Activated T-helper 1 cell treated with anti-CD3 and anti-CD28 coated beads, Interleukin-12 subunit alpha, Interleukin-12 subunit beta, Interleukin-2, Interleukin-4 antibody, amounts not matched to agents 30 ng/mL and 10 ng/mL and 1 ng/mL, durations not matched to agents 14 hours and 24 hours and 36 hours (primary cell): ENCODE measurements at regions of chr10 and their contacts with region 1.

Region 1: GRCh38 chr10:7410862-7411670 is at the start of gene SFMBT2:
- DNase-seq: peak; percentile 64
- H3K4me3 Mint-ChIP-seq: peak within 1 kb of the TSS; percentile 96
- H3K27ac Mint-ChIP-seq: peak within 1 kb of the TSS; percentile 96
- H3K4me1 Mint-ChIP-seq: peaks cover 38% of the 10 kb centered on the region
- H3K27me3 Mint-ChIP-seq: peaks cover 35% of the 10 kb centered on the region
- total RNA-seq, gene SFMBT2: 38.3 and 39.1 TPM in 2 replicates

Region 2: GRCh38 chr10:6920072-6921019 is 490.7 kb before region 1 on chr10:
- intact Hi-C with region 1: loop called (anchors 2 kb)
- DNase-seq: peak; percentile 71
- H3K4me3 Mint-ChIP-seq: no peak overlapping the region
- H3K27ac Mint-ChIP-seq: peak overlapping the region; percentile 26
- H3K4me1 Mint-ChIP-seq: peaks cover 35% of the 10 kb centered on the region
- H3K27me3 Mint-ChIP-seq: no peaks in the 10 kb centered on the region

Region 3: DNA sequence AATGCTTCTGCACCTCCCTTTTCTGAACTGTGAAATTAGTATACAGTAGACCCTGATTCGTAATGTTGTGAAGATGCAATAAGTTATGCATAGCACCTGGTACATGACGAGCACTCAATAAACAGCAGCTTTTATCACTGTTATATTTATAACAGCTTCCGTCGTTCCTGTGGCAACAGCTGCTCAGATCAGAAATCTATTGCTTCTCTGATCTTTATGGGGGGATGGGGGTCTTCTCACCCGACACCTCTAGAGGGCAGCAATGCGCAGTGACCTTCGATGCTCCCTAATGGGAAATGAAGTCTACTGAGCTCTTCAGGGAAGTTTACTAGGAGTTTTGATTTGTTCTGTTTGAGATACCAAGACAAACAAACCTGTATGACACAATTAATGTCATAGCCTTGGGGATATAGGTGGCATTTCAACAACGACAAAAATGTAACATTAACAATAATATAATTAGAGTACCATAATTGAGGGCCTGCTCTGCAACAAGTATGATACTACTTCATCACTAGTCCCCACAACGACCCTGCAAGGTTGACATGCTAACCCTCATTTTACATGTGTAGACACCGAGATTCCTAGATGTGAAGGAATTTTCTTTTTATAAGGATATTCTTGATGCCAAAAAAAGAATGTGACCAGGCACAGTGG is 289.8 kb before region 1 on chr10:
- intact Hi-C with region 1: loop called (anchors 1 kb)
- DNase-seq: peak; percentile 37
- H3K4me3 Mint-ChIP-seq: no peak overlapping the region
- H3K27ac Mint-ChIP-seq: peak overlapping the region; percentile 38
- H3K4me1 Mint-ChIP-seq: peaks cover 6% of the 10 kb centered on the region
- H3K27me3 Mint-ChIP-seq: peaks cover 36% of the 10 kb centered on the region

Region 4: DNA sequence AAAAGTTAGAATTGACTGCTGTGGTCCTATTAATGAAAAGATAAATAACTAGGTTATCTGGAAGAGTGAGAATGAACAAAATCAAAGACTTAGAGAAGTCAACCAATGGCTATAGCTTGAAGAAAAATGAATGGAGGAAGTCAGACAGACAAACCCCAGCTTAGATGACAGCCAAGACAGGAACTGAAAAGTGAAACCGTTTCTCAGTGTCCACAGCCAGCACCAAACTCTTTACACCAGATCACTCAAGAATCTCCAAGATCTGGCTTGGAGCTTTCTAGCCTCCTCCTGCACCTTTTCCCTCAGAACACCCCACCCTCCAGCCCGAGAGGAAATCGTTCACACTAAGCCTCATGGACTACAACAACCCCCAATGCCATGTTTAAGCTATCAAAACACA is 167.2 kb before region 1 on chr10:
- intact Hi-C with region 1: loop called (anchors 1 kb)
- DNase-seq: no peak
- H3K4me3 Mint-ChIP-seq: peak overlapping the region; percentile 23
- H3K27ac Mint-ChIP-seq: peak overlapping the region; percentile 5
- H3K4me1 Mint-ChIP-seq: peaks cover 54% of the 10 kb centered on the region
- H3K27me3 Mint-ChIP-seq: no peaks in the 10 kb centered on the region

Region 5: GRCh38 chr10:7269988-7270387 is 141.1 kb before region 1 on chr10:
- intact Hi-C with region 1: loop called (anchors 2 kb)
- DNase-seq: no peak
- H3K4me3 Mint-ChIP-seq: peak overlapping the region; percentile 15
- H3K27ac Mint-ChIP-seq: peak overlapping the region; percentile 94
- H3K4me1 Mint-ChIP-seq: peaks cover 65% of the 10 kb centered on the region
- H3K27me3 Mint-ChIP-seq: no peaks in the 10 kb centered on the region

Region 6: GRCh38 chr10:7388602-7389001 is 22.5 kb before region 1 on chr10:
- intact Hi-C with region 1: loop called (anchors 2 kb)
- DNase-seq: peak; percentile 19
- H3K4me3 Mint-ChIP-seq: peak overlapping the region; percentile 66
- H3K27ac Mint-ChIP-seq: peak overlapping the region; percentile 95
- H3K4me1 Mint-ChIP-seq: peaks cover 48% of the 10 kb centered on the region
- H3K27me3 Mint-ChIP-seq: no peaks in the 10 kb centered on the region

Region 7: GRCh38 chr10:7744307-7744706 is 333.2 kb after region 1 on chr10:
- intact Hi-C with region 1: no loop called
- DNase-seq: no peak
- H3K4me3 Mint-ChIP-seq: no peak overlapping the region
- H3K27ac Mint-ChIP-seq: no peak overlapping the region
- H3K4me1 Mint-ChIP-seq: no peaks in the 10 kb centered on the region
- H3K27me3 Mint-ChIP-seq: no peaks in the 10 kb centered on the region

Region 8: DNA sequence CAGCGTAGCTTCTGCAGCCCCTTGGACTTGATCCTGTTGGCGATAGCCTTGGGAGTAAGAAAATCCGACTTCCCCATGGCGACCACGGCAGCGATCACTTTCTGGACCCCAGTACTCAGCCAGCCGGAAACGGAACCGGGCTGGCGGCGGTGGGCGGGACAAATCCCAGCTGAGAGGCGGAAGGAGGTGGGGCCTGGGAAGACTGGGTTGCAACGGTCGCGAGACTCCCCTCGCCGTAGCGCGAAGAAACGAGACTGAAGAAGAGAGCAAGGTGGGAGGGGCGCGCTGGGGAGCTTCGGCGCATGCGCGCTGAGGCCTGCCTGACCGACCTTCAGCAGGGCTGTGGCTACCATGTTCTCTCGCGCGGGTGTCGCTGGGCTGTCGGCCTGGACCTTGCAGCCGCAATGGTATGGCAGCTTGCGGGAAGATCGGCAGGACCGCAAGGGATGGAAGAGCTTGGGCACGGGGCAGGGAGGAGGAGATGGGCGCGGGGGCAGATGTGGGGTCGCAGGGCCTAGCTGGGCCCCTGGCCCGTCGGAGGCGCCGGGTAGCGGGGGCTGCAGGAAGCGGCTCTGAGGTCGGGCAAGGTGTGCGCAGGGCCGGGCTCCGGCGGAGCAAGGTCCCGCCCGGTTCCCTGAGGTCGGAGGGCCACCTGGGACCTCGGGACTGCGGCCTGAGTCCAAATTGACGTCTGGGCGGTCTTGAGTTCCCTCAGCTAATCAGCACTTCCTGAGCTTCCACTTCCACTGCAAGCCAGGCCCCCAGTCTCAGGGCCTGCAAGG is 377.0 kb after region 1 on chr10 and contains the starts of genes ATP5F1C and KIN:
- intact Hi-C with region 1: loop called (anchors 2 kb)
- DNase-seq: peak; percentile 97
- H3K4me3 Mint-ChIP-seq: no peak within 1 kb of the TSS
- H3K27ac Mint-ChIP-seq: peak within 1 kb of the TSS; percentile 75
- H3K4me1 Mint-ChIP-seq: peaks cover 47% of the 10 kb centered on the region
- H3K27me3 Mint-ChIP-seq: no peaks in the 10 kb centered on the region
- total RNA-seq, gene ATP5F1C: 316 and 329 TPM in 2 replicates
- total RNA-seq, gene KIN: 11.0 and 12.3 TPM in 2 replicates